ENCODE measurements at regions of chr17 and their contacts with region 1.

Region 1: GRCh38 chr17:59220376-59221158 is at the start of gene GDPD1:
- DNase-seq: peak; percentile 98
- ATAC-seq: peak; percentile 97
- H3K4me3 ChIP-seq: peak within 1 kb of the TSS; percentile 88
- H3K27ac ChIP-seq: no peak within 1 kb of the TSS
- H3K4me1 ChIP-seq: peaks cover 16% of the 10 kb centered on the region; the same call in 1 of the 2 replicates
- H3K27me3 ChIP-seq: no peaks in the 10 kb centered on the region
- CTCF ChIP-seq: peak; percentile 81
- total RNA-seq, gene GDPD1: 1.2 and 1.5 TPM in 2 replicates

Region 2: GRCh38 chr17:58920642-58921172 is 299.9 kb before region 1 on chr17:
- CTCF ChIA-PET with region 1: no interaction called
- POLR2A ChIA-PET with region 1: no interaction called
- intact Hi-C with region 1: no loop called
- DNase-seq: no peak
- ATAC-seq: no peak
- H3K4me3 ChIP-seq: no peak overlapping the region
- H3K27ac ChIP-seq: no peak overlapping the region
- H3K4me1 ChIP-seq: no peaks in the 10 kb centered on the region
- H3K27me3 ChIP-seq: peaks cover 41% of the 10 kb centered on the region
- CTCF ChIP-seq: no peak

Region 3: DNA sequence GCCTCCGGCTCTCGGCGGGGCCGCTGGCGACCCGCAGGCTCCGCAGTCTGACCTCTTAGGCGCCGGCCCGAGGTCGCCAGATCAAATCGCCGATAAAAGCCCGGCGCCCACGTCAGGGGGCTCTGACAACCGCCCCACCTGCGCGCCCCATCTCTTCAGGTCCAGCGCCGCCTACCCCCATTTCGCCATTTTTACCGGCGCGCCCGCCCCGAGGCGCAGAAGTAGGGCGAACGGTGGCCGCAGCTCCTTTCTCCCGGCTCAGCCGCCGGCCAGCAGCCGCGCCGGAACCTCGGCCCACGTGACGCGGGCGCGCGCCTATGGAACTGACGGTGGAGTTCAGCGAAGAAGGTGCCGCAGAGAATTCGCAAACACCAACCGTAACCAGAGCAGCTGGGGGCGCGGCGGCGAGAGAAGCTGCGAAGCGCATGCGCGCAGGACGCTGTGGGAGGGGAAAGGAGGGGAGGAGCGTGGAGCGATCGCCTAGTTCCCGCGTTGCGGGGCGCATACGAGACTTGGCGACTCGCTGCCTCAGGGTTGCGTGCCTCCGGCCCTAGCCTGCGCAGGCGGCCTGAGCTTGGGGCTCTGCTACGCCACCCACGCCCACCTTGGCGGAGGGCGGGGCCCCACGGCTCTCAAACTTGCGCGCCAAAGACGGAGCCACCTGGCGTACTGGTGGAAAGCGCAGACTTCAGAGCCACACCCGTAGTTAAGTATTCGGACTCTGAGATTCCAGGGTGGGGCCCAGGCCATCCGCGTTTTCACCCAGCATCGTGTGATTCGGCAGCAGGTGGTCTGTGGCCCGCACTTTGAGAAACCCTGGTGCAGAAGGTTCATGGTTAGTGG is 113.9 kb before region 1 on chr17 and contains the start of gene TRIM37:
- CTCF ChIA-PET with region 1: no interaction called
- POLR2A ChIA-PET with region 1: no interaction called
- intact Hi-C with region 1: loop called (anchors 5 kb)
- DNase-seq: peak; percentile 100
- ATAC-seq: peak; percentile 96
- H3K4me3 ChIP-seq: peak within 1 kb of the TSS; percentile 87
- H3K27ac ChIP-seq: peak within 1 kb of the TSS; percentile 84
- H3K4me1 ChIP-seq: peaks cover 24% of the 10 kb centered on the region
- H3K27me3 ChIP-seq: no peaks in the 10 kb centered on the region
- CTCF ChIP-seq: peak; percentile 31
- total RNA-seq, gene TRIM37: 35.1 and 42.0 TPM in 2 replicates

Region 4: GRCh38 chr17:59244081-59244480 is 23.5 kb after region 1 on chr17:
- CTCF ChIA-PET with region 1: no interaction called
- POLR2A ChIA-PET with region 1: no interaction called
- intact Hi-C with region 1: no loop called
- DNase-seq: no peak
- ATAC-seq: no peak
- H3K4me3 ChIP-seq: no peak overlapping the region
- H3K27ac ChIP-seq: no peak overlapping the region
- H3K4me1 ChIP-seq: no peaks in the 10 kb centered on the region
- H3K27me3 ChIP-seq: no peaks in the 10 kb centered on the region
- CTCF ChIP-seq: no peak

Region 5: GRCh38 chr17:59296771-59297500 is 76.4 kb after region 1 on chr17:
- CTCF ChIA-PET with region 1: no interaction called
- POLR2A ChIA-PET with region 1: no interaction called
- intact Hi-C with region 1: loop called (anchors 2 kb)
- DNase-seq: peak; percentile 79
- ATAC-seq: peak; percentile 58
- H3K4me3 ChIP-seq: peak overlapping the region; percentile 30; the same call in 1 of the 2 replicates
- H3K27ac ChIP-seq: peak overlapping the region; percentile 64
- H3K4me1 ChIP-seq: peaks cover 20% of the 10 kb centered on the region
- H3K27me3 ChIP-seq: no peaks in the 10 kb centered on the region
- CTCF ChIP-seq: no peak

Region 6: GRCh38 chr17:59311130-59311920 is 90.8 kb after region 1 on chr17:
- CTCF ChIA-PET with region 1: interaction called, 6 read pairs
- POLR2A ChIA-PET with region 1: no interaction called
- intact Hi-C with region 1: loop called (anchors 1 kb)
- DNase-seq: peak; percentile 88
- ATAC-seq: peak; percentile 99
- H3K4me3 ChIP-seq: no peak overlapping the region
- H3K27ac ChIP-seq: no peak overlapping the region
- H3K4me1 ChIP-seq: no peaks in the 10 kb centered on the region
- H3K27me3 ChIP-seq: no peaks in the 10 kb centered on the region
- CTCF ChIP-seq: peak; percentile 96

Region 7: GRCh38 chr17:59440784-59441441 is 220.3 kb after region 1 on chr17:
- CTCF ChIA-PET with region 1: interaction called, 5 read pairs
- POLR2A ChIA-PET with region 1: no interaction called
- intact Hi-C with region 1: loop called (anchors 5 kb)
- DNase-seq: peak; percentile 95
- ATAC-seq: peak; percentile 100
- H3K4me3 ChIP-seq: no peak overlapping the region
- H3K27ac ChIP-seq: no peak overlapping the region
- H3K4me1 ChIP-seq: no peaks in the 10 kb centered on the region
- H3K27me3 ChIP-seq: no peaks in the 10 kb centered on the region
- CTCF ChIP-seq: peak; percentile 97

Region 8: GRCh38 chr17:59479158-59479557 is 258.6 kb after region 1 on chr17:
- CTCF ChIA-PET with region 1: no interaction called
- POLR2A ChIA-PET with region 1: interaction called, 18 read pairs
- intact Hi-C with region 1: no loop called
- DNase-seq: no peak
- ATAC-seq: no peak
- H3K4me3 ChIP-seq: no peak overlapping the region
- H3K27ac ChIP-seq: no peak overlapping the region
- H3K4me1 ChIP-seq: no peaks in the 10 kb centered on the region
- H3K27me3 ChIP-seq: no peaks in the 10 kb centered on the region
- CTCF ChIP-seq: no peak